Activated CD4-positive, alpha-beta T cell treated with anti-CD3 and anti-CD28 coated beads, Interleukin-2, amount 10 ng/mL, durations not matched to agents 24 days and 14 days (primary cell): ENCODE measurements at regions of chr10 and their contacts with region 1.

Region 1: DNA sequence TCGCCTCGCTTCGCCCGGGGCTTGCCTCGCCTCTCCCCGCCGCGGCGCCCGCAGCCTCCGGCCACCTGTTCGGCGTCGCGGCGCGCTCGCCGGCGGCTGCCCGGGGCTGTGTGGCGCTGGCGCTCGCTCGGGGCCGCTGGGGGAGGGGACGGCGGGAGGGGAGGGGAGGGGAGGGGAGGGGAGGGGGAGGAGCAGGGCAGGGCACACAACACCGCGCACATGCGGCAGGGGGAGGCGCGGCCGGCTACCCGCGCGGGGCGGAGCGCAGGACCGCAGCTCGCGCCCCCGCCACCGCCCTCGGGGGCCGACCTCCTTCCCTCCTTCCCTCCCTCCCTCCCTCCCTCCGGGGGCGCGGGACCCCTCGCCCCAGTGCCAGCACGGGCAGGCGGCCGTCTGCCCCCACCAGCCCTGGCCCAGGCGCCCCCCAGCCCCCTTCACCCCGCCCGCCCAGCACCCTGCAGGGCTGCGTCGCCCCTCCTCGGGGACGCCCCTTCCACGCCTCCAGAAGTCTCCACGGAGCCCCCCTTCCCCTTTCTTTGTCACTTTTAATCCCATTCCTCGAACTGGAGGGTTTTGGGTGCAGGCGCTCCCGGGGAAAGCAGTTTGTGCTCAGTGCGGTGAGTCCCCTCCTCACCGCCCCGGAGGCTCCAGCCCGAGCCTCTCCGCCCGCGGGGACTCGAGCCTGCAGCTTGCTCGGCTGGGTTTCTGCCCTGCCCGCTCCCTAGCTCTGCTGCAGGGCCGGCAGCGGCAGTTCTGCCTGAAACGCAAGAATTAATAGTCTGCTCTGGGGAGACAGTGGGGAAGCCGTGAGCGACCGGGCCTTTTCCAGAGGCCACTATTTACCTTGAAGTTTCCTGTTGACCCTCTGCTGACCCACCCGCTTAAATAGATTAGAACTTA is at the start of gene PARD3:
- DNase-seq: peak; percentile 63
- H3K4me3 Mint-ChIP-seq: peak within 1 kb of the TSS; percentile 74
- H3K27ac Mint-ChIP-seq: no peak within 1 kb of the TSS
- H3K4me1 Mint-ChIP-seq: peaks cover 13% of the 10 kb centered on the region
- H3K27me3 Mint-ChIP-seq: peaks cover 63% of the 10 kb centered on the region
- total RNA-seq, gene PARD3: 2.3 and 2.9 TPM in 2 replicates

Region 2: DNA sequence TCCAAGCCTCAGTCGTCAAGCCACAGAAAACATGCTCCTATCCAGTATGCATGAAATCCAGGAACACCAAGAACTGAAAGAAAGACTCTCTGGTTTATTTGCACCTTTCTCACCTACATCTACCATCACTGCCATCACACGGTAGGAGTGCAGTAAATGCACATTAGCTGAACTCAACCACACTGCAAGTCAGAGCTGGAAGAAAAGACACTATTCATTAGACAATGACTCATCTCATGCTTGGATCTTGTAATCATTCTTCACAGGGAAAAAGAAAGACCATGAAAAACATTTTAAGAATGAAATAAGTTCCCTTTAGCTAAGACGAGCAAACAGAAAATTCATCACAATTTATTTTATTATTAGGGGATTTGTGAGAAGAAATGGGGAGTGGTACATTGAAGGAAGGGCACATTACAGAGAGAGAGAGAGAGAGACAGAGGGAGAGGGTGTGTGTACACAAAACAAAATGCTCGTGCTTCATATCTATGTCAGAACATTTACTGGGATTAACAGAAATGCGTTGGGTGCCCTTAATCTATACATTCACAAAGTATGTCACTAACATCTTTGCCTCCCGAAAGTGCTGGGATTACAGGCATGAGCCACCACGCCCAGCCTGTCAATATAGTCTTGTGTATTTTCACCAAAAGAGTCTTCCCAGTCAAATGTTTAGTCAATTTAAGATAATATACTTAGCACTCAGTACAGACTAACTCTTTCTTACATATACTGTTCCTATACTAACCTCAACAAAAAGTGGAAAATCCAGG is 325.3 kb before region 1 on chr10:
- intact Hi-C with region 1: no loop called
- DNase-seq: no peak
- H3K4me3 Mint-ChIP-seq: no peak overlapping the region
- H3K27ac Mint-ChIP-seq: no peak overlapping the region
- H3K4me1 Mint-ChIP-seq: no peaks in the 10 kb centered on the region
- H3K27me3 Mint-ChIP-seq: no peaks in the 10 kb centered on the region

Region 3: GRCh38 chr10:34845070-34845469 is 29.6 kb after region 1 on chr10:
- intact Hi-C with region 1: no loop called
- DNase-seq: no peak
- H3K4me3 Mint-ChIP-seq: no peak overlapping the region
- H3K27ac Mint-ChIP-seq: no peak overlapping the region
- H3K4me1 Mint-ChIP-seq: no peaks in the 10 kb centered on the region
- H3K27me3 Mint-ChIP-seq: peaks cover 5% of the 10 kb centered on the region

Region 4: GRCh38 chr10:35635576-35635975 is 820.1 kb after region 1 on chr10:
- intact Hi-C with region 1: loop called (anchors 10 kb)
- DNase-seq: peak; percentile 85
- H3K4me3 Mint-ChIP-seq: no peak overlapping the region
- H3K27ac Mint-ChIP-seq: no peak overlapping the region
- H3K4me1 Mint-ChIP-seq: peaks cover 2% of the 10 kb centered on the region
- H3K27me3 Mint-ChIP-seq: peaks cover 47% of the 10 kb centered on the region